GM10248 (cell line): ENCODE measurements at regions of chr17 and their contacts with region 1.

Region 1: GRCh38 chr17:47949136-47949759 is 7.9 kb downstream of the PNPO start:
- DNase-seq: peak; percentile 82
- CTCF ChIP-seq: peak; percentile 88

Region 2: GRCh38 chr17:47905221-47905781 is 43.9 kb before region 1 on chr17:
- CTCF ChIA-PET with region 1: interaction called, 11 read pairs
- POLR2A ChIA-PET with region 1: no interaction called
- DNase-seq: no peak
- CTCF ChIP-seq: no peak

Region 3: GRCh38 chr17:47978324-47978723 is 29.1 kb after region 1 on chr17:
- CTCF ChIA-PET with region 1: interaction called, 584 read pairs
- POLR2A ChIA-PET with region 1: no interaction called
- DNase-seq: peak; percentile 81
- CTCF ChIP-seq: peak; percentile 71

Region 4: DNA sequence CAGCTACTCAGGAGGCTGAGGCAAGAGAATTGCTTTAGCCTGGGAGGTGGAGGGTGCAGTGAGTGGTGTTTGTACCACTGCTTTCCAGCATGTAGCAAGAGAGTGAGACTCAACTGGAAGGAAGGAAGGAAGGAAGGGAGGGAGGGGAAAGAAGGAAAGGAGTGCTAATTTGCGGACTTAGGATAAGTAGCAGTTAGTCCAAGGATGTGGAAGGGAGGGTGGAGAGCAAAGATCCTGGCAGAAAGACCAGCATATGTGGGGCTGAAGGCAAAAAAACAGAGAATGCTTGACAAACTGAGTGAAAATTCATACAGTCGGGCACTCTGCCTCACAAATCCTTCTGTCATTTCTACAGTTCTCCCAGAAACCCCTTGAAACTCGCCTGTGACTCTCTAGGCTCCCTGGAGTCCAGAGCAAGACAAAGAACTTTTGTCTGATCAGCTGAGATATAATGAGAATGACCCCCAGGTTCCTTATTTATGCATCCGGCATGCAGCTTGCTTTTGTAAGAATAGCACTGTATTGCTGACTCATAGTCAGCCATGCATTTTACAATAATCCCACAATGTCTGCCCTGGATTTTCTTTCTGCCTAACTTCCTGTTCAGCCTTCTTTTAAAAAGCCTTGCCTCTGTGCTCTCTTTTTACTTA is 53.1 kb after region 1 on chr17:
- CTCF ChIA-PET with region 1: interaction called, 11 read pairs
- POLR2A ChIA-PET with region 1: no interaction called
- DNase-seq: peak; percentile 68
- CTCF ChIP-seq: no peak

Region 5: DNA sequence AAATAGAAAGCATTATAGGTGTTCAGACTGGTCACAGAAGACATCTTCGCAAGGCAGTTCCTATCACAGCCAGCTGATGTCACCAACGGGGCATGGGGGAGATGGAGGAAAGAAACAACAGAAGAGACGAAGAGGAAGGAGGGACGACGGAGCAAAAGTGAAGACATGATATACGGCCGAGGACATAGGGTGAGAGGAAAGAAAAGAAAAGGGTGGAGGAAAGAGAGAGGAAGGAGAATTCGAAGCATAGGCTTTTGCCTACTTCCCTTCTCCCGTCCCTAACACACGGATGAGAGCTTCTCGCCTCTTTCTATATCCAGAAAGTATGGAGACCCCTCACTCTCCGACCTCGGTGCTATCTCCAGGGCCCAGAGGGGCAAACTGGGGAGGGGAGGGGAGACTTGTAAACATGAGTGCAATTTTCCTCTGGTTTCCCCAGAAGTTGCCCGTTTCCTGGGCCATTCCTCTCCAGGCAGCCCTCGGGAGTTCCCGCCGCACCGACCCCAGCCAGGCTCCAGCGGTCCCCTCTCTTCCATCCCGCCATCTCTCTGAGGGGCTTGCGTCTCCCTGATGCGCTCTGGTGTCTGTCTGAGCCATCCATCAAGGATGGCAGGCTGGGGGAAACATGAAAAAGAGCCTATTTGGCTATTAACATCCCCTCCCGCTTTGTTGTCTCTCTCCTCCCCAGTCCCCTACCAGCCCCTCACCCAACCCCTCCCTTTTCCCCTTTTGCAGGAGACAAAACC is 62.3 kb after region 1 on chr17:
- CTCF ChIA-PET with region 1: interaction called, 99 read pairs
- POLR2A ChIA-PET with region 1: no interaction called
- DNase-seq: peak; percentile 73
- CTCF ChIP-seq: peak; percentile 66